ENCODE measurements at regions of chr11 and their contacts with region 1.

Region 1: GRCh38 chr11:28529540-28530410 is 421.6 kb downstream of the METTL15 start:
- DNase-seq: no peak
- ATAC-seq: no peak
- H3K4me3 ChIP-seq: no peak overlapping the region
- H3K27ac ChIP-seq: no peak overlapping the region
- H3K4me1 ChIP-seq: no peaks in the 10 kb centered on the region
- H3K27me3 ChIP-seq: no peaks in the 10 kb centered on the region

Region 2: GRCh38 chr11:27705873-27706820 is 823.6 kb before region 1 on chr11:
- intact Hi-C with region 1: loop called in 1 of 2 experiments (anchors 10 kb)
- DNase-seq: no peak
- ATAC-seq: no peak
- H3K4me3 ChIP-seq: no peak overlapping the region
- H3K27ac ChIP-seq: no peak overlapping the region
- H3K4me1 ChIP-seq: peaks cover 0 to 5% of the 10 kb centered on the region in 2 donors
- H3K27me3 ChIP-seq: no peaks in the 10 kb centered on the region